Activated CD8-positive, alpha-beta T cell treated with anti-CD3 and anti-CD28 coated beads for 36 hours (primary cell): ENCODE measurements at regions of chr12 and their contacts with region 1.

Region 1: DNA sequence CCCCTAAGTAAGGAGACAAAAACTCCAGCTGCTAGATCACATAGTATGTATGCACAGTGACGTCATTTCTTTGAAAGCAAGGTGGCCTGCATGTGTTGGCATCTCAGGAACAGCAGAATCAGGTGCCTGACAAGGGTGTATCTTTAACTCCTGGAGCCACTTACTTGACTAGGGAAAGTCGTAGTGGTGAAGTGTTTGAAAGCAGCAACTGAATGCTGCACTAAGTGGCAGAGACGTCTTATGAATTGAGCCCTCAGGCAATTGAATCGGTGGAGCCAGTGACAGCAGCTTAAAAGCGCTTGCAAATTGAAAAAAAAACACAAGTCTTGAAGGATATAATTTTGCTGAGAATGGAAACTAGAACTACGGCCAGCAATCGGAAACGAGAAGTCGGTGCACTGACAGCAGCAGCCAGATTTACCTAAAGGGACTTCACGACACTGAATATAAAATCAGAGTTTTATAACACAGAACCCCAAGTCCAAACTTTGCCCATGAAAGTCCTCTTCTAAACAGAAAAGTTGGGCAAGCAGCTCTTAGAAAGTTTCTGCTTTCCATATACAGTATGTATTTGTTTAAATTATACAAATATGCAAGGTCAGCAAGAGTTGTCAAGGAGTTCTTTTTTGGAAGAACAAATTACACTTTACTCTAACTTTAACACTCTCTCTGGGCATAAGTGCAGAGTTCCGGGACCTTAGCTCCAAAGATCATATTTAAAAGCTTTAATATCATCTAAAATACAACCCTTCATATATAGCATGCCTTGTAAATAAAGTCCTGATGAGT is 1.1 kb downstream of the IGF1 start:
- DNase-seq: peak; percentile 14
- ATAC-seq: peak; percentile 29
- H3K4me3 Mint-ChIP-seq: no peak overlapping the region
- H3K27ac Mint-ChIP-seq: no peak overlapping the region
- H3K4me1 Mint-ChIP-seq: peaks cover 46% of the 10 kb centered on the region
- H3K27me3 Mint-ChIP-seq: no peaks in the 10 kb centered on the region
- CTCF ChIP-seq: no peak

Region 2: GRCh38 chr12:101719546-101719945 is 759.7 kb before region 1 on chr12:
- CTCF ChIA-PET with region 1: no interaction called
- POLR2A ChIA-PET with region 1: no interaction called
- intact Hi-C with region 1: no loop called
- DNase-seq: no peak
- ATAC-seq: no peak
- H3K4me3 Mint-ChIP-seq: no peak overlapping the region
- H3K27ac Mint-ChIP-seq: no peak overlapping the region
- H3K4me1 Mint-ChIP-seq: peaks cover 2% of the 10 kb centered on the region
- H3K27me3 Mint-ChIP-seq: no peaks in the 10 kb centered on the region
- CTCF ChIP-seq: no peak

Region 3: GRCh38 chr12:102300824-102301461 is 178.3 kb before region 1 on chr12:
- CTCF ChIA-PET with region 1: interaction called, 7 read pairs
- POLR2A ChIA-PET with region 1: no interaction called
- intact Hi-C with region 1: loop called (anchors 5 kb)
- DNase-seq: peak; percentile 33
- ATAC-seq: peak; percentile 73
- H3K4me3 Mint-ChIP-seq: no peak overlapping the region
- H3K27ac Mint-ChIP-seq: no peak overlapping the region
- H3K4me1 Mint-ChIP-seq: no peaks in the 10 kb centered on the region
- H3K27me3 Mint-ChIP-seq: peaks cover 6% of the 10 kb centered on the region
- CTCF ChIP-seq: peak; percentile 54

Region 4: GRCh38 chr12:102388469-102388868 is 90.8 kb before region 1 on chr12:
- CTCF ChIA-PET with region 1: no interaction called
- POLR2A ChIA-PET with region 1: no interaction called
- intact Hi-C with region 1: no loop called
- DNase-seq: no peak
- ATAC-seq: no peak
- H3K4me3 Mint-ChIP-seq: no peak overlapping the region
- H3K27ac Mint-ChIP-seq: no peak overlapping the region
- H3K4me1 Mint-ChIP-seq: no peaks in the 10 kb centered on the region
- H3K27me3 Mint-ChIP-seq: peaks cover 12% of the 10 kb centered on the region
- CTCF ChIP-seq: no peak